MCF 10A (cell line): ENCODE measurements at regions of chr6 and their contacts with region 1.

Region 1: DNA sequence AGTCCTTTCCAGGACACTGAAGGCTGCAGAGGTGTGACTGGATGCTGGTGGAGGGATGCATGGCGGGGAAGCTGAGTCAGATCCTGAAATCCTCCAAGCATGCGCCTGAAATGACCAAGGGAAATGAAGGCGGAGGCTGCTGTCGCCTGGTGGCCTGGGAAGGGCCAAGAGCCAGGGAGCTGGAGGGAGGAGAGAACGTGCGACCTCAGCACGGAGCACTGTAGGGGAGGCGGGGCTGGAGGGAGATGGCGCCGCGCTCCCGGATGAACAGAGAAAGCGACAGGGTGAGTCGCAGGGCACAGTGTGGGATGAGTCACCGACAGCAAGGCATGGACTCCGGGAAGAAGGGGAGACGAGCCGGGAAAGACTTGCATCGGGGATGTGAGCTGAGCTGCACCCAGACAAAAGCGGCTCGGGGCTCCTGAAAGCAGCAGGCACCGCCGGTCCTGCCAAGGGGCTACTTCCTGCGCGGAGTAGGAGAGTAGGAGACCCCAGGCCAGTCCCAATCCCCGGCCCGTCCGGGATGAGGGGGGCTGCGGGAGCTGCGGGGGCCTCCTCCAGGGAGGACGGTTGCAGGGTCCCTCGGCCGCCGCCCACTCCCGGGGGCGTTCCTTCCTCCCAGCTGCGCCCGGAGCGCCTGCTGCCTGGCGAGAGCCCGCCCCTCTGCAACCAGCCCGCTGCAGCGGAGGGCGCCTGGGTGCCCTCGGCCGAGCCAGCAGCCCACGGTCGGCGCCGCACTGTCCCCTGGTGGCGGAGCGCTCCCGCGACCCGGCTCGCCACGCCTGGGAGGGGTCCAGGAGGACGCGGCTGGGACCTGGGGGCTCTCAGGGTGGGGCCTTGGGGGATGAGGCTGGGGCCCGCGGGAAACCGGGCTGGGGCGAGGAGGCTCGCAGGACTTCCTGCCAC is 11.0 kb upstream of the NQO2 start:
- DNase-seq: peak; percentile 90
- H3K4me3 Mint-ChIP-seq: peak overlapping the region; percentile 87
- H3K27ac Mint-ChIP-seq: peak overlapping the region; percentile 100
- H3K4me1 Mint-ChIP-seq: peaks cover 31% of the 10 kb centered on the region
- H3K27me3 Mint-ChIP-seq: no peaks in the 10 kb centered on the region
- CTCF ChIP-seq: peak; percentile 86

Region 2: DNA sequence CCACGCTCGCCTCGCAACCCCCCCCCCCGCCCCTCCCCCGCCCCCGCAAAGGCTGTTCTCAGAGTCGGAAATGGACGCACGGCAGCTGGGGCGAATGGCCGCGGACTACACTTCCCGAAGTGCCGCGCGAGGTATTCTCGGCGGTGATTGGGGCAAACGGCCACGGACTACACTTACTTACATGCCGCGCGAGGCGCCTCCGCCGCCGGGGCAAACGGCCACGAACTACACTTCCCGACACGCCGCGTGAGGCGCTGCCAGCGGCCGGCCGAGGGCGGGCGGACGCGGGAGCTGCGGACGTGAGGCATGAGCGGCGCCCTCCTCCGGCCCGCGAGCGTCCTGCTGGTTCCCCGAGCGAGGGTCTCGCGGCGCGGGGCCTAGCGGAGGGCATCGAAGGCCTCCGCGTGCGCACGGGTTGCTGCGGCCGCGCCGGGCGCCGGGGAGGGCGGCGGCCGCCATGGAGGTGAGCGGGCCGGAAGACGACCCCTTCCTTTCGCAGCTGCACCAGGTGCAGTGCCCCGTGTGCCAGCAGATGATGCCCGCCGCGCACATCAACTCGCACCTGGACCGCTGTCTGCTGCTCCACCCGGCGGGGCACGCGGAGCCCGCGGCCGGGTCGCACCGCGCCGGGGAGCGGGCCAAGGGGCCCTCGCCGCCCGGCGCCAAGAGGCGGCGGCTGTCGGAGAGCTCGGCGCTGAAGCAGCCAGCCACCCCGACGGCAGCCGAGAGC is 223.3 kb before region 1 on chr6 and contains the start of gene WRNIP1:
- CTCF ChIA-PET with region 1: no interaction called
- POLR2A ChIA-PET with region 1: interaction called, 17 read pairs
- intact Hi-C with region 1: no loop called
- DNase-seq: peak; percentile 98
- H3K4me3 Mint-ChIP-seq: peak within 1 kb of the TSS; percentile 71
- H3K27ac Mint-ChIP-seq: peak within 1 kb of the TSS; percentile 98
- H3K4me1 Mint-ChIP-seq: peaks cover 24% of the 10 kb centered on the region
- H3K27me3 Mint-ChIP-seq: no peaks in the 10 kb centered on the region
- CTCF ChIP-seq: peak; percentile 43
- total RNA-seq, gene WRNIP1: 33.4 and 44.8 TPM in 2 replicates

Region 3: GRCh38 chr6:2810092-2810671 is 178.5 kb before region 1 on chr6:
- CTCF ChIA-PET with region 1: no interaction called
- POLR2A ChIA-PET with region 1: interaction called, 10 read pairs
- intact Hi-C with region 1: no loop called
- DNase-seq: peak; percentile 99
- H3K4me3 Mint-ChIP-seq: peak overlapping the region; percentile 24
- H3K27ac Mint-ChIP-seq: peak overlapping the region; percentile 84
- H3K4me1 Mint-ChIP-seq: peaks cover 24% of the 10 kb centered on the region
- H3K27me3 Mint-ChIP-seq: no peaks in the 10 kb centered on the region
- CTCF ChIP-seq: no peak

Region 4: DNA sequence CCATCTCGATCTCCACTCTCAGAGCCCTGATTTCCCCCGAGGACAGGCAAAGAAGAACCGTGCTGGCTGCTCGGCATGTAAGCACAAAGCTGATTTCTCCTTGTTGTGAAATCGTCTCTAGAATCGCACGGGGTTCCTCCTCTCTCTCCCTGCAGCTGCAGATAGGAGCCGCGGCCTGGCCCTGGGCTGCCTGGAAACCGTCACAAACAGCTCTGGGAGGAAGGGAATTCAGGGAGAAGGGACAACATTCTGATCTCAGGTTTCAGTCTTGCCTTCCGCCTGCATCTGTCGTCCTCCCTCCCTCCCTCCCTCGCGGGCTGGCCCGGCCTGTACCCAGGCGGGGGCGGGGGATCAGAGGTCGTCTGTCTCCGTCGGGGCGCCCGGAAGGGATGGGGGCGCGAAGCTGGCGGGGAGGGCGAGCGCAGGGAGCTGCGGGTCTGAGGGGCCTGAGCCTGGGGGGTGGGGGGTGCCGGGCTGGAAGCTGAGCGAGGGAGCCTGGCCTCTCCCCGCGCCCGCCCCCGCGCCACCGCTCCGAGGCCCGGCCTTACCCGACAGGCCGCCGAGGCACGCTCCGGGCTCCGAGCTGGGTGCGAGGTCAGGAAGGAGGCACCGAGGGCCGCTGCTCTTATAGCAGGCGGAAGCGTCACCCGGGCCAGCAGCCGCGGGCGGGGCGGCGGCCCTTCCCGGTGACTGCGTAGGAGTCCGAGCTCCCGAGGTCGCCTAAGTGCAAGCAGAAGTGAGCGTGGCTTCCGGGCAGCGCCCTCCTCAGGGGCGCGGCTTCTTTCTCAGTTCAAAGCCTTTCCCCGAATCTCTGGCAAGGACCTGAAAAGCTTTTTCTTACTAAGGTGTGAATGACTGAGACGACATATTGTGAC is 147.2 kb before region 1 on chr6 and contains the start of gene SERPINB1:
- CTCF ChIA-PET with region 1: interaction called, 17 read pairs
- POLR2A ChIA-PET with region 1: interaction called, 50 read pairs
- intact Hi-C with region 1: loop called (anchors 1 kb)
- DNase-seq: peak; percentile 93
- H3K4me3 Mint-ChIP-seq: peak within 1 kb of the TSS; percentile 88
- H3K27ac Mint-ChIP-seq: peak within 1 kb of the TSS; percentile 96
- H3K4me1 Mint-ChIP-seq: peaks cover 31% of the 10 kb centered on the region
- H3K27me3 Mint-ChIP-seq: no peaks in the 10 kb centered on the region
- CTCF ChIP-seq: no peak
- total RNA-seq, gene SERPINB1: 20.8 and 28.0 TPM in 2 replicates

Region 5: DNA sequence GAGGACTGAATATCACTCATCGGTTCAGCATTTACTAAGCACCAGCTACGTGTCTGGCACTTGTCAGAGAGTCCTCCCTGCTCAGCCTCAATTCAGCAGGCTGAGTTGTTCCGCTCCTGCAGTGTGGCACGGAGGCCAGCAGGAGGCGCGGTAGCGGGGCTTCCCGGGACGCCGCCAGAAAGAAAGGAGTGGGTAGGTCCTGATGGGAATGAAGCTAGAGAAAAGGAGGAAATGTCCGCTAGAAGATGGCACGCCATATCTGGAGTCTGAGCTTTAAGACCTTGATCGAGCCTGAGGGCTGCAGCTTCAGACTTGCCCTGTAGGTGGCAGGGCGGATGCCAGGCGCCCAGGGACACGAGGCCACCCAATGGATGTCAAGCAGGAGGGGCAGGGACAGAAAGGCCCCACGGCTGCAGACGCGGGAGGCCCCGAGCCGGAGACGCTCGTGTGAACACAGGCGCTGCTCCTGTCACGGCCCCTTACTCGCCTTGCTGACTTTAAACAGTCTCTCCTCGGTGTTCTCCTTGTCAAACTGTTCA is 36.1 kb before region 1 on chr6:
- CTCF ChIA-PET with region 1: interaction called, 6 read pairs
- POLR2A ChIA-PET with region 1: interaction called, 4 read pairs
- intact Hi-C with region 1: loop called (anchors 1 kb)
- DNase-seq: peak; percentile 50
- H3K4me3 Mint-ChIP-seq: no peak overlapping the region
- H3K27ac Mint-ChIP-seq: no peak overlapping the region
- H3K4me1 Mint-ChIP-seq: no peaks in the 10 kb centered on the region
- H3K27me3 Mint-ChIP-seq: no peaks in the 10 kb centered on the region
- CTCF ChIP-seq: peak; percentile 74

Region 6: DNA sequence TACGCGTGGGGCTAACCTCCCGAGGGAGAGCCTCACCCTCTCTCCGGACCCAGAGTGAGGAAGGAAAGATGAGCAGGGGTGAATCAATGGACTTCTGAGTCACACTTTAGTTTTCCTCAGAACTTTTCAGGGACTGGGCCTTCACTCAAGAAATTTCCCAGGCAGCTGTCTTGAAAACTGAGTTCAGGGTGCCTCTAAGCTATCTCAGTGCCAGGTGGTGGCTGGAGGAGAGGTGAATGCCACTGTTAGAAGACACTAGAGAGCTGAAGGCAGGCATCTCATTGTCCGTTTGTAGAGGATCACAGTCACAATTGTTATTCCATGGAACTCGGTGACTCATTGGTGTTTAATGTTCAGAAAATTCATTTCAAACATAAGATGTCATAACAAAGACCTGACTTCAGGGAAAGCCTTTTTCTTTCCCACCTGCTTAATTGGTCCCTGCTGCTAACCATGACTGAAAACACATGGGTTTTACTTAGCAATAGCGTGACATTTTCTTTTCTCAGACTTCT is 12.1 kb before region 1 on chr6:
- CTCF ChIA-PET with region 1: interaction called, 10 read pairs
- POLR2A ChIA-PET with region 1: interaction called, 65 read pairs
- intact Hi-C with region 1: no loop called
- DNase-seq: peak; percentile 74
- H3K4me3 Mint-ChIP-seq: no peak overlapping the region
- H3K27ac Mint-ChIP-seq: no peak overlapping the region
- H3K4me1 Mint-ChIP-seq: peaks cover 12% of the 10 kb centered on the region
- H3K27me3 Mint-ChIP-seq: no peaks in the 10 kb centered on the region
- CTCF ChIP-seq: no peak

Region 7: GRCh38 chr6:3061501-3061941 is 72.8 kb after region 1 on chr6:
- CTCF ChIA-PET with region 1: interaction called, 10 read pairs
- POLR2A ChIA-PET with region 1: interaction called, 42 read pairs
- intact Hi-C with region 1: no loop called
- DNase-seq: peak; percentile 82
- H3K4me3 Mint-ChIP-seq: no peak overlapping the region
- H3K27ac Mint-ChIP-seq: no peak overlapping the region
- H3K4me1 Mint-ChIP-seq: peaks cover 5% of the 10 kb centered on the region
- H3K27me3 Mint-ChIP-seq: peaks cover 12% of the 10 kb centered on the region
- CTCF ChIP-seq: peak; percentile 23